Endothelial cell of umbilical vein (primary cell): ENCODE measurements at regions of chr11 and their contacts with region 1.

Region 1: GRCh38 chr11:47407746-47408590 is at the start of gene SLC39A13:
- DNase-seq: peak; percentile 98
- H3K4me3 ChIP-seq: peak within 1 kb of the TSS; percentile 46 to 91 (median 72)
- H3K27ac ChIP-seq: peak within 1 kb of the TSS; percentile 90
- H3K4me1 ChIP-seq: peaks cover 29% of the 10 kb centered on the region
- H3K27me3 ChIP-seq: no peaks in the 10 kb centered on the region
- CTCF ChIP-seq: peak; percentile 76 to 99
- POLR2A ChIP-seq: peak; percentile 86
- total RNA-seq, gene SLC39A13: 86.3 and 91.9 TPM in 2 replicates

Region 2: DNA sequence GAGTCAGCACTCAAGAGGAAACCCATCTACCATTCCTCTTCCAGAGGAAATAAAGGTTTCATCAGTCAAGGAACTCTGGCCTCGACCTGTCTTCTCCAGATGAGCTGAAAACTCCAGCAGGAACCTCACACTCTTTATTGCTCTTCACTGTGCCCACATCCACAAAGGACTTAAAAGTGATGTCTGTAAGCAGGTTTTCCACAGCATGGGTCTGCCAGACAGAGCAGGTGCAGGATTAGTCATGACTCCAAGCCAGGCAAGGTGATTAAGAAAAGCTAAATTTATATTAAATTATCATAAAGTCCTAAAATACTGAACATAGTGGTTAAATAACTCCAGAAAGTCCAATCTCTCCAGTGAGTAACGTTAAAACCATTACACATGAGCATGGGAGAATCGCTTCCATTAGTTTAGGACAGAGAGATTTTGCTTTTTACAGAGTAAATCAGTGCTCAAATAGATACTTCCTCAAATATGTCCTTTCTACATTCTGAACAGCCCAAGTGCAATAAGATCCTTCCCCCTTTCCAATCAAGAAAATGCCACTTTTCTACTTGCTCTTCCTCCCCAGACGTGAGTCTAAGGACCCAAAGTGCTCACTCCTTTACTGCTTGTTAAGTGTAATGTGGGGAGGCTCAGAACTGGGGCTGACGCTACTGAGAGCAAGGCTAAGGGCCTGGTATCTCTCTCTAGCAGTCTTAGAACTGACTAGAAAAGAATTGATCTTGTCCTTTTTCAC is 551.2 kb before region 1 on chr11:
- CTCF ChIA-PET with region 1: no interaction called
- POLR2A ChIA-PET with region 1: no interaction called
- dilution Hi-C with region 1: no loop called
- intact Hi-C with region 1: no loop called
- DNase-seq: no peak
- H3K4me3 ChIP-seq: no peak overlapping the region
- H3K27ac ChIP-seq: no peak overlapping the region
- H3K4me1 ChIP-seq: no peaks in the 10 kb centered on the region
- H3K27me3 ChIP-seq: no peaks in the 10 kb centered on the region
- CTCF ChIP-seq: no peak
- POLR2A ChIP-seq: no peak

Region 3: GRCh38 chr11:47176328-47177228 is 231.4 kb before region 1 on chr11 and contains the start of gene ARFGAP2:
- CTCF ChIA-PET with region 1: interaction called, 3 read pairs
- POLR2A ChIA-PET with region 1: no interaction called
- dilution Hi-C with region 1: no loop called
- intact Hi-C with region 1: loop called (anchors 1 kb)
- DNase-seq: peak; percentile 97
- H3K4me3 ChIP-seq: peak within 1 kb of the TSS; percentile 69 to 95 (median 79)
- H3K27ac ChIP-seq: peak within 1 kb of the TSS; percentile 91
- H3K4me1 ChIP-seq: peaks cover 13% of the 10 kb centered on the region
- H3K27me3 ChIP-seq: no peaks in the 10 kb centered on the region
- CTCF ChIP-seq: no peak
- POLR2A ChIP-seq: peak; percentile 80
- total RNA-seq, gene ARFGAP2: 78.9 and 84.3 TPM in 2 replicates

Region 4: DNA sequence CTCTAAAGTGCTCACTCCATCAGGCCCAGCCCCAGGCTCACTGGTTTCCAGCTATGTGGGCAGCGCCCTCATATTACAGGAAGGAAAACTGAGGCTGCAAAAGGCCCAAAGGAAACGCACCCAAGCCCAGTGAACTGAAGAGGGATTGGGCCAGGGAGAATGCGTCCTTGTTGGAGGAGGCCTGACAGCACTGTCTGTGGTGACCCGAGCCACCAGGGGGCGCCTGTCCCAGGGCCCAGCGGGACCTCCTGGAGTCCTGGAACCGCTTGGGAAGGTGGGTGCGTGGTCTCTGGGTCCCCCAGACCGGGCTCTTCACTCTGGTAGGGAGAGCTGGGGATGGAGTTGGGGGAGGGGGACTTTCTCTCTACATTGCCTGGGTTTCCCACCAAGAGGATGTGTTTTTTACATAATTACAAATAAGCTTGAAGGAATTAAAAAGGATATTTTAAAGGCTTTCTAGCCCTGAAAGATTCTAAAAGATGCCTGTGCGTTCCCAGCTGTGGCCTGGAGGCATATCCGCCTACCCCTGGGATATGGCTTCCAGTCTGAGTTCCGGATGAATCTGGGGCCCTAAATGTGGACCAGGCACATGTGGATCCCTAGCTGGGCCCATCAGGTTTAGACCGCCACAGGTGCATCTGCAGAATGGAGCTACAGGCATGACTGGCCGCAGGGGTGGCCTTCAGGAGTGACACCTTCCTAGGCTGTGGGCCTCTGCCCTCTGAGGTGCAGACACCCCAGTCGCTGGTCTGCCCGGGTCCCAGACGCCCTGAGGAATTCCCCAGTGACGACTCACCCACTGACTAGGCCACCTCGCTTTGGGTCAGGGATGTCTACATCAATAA is 33.9 kb before region 1 on chr11:
- CTCF ChIA-PET with region 1: interaction called, 148 read pairs
- POLR2A ChIA-PET with region 1: no interaction called
- dilution Hi-C with region 1: no loop called
- intact Hi-C with region 1: loop called (anchors 1 kb)
- DNase-seq: peak; percentile 76
- H3K4me3 ChIP-seq: no peak overlapping the region
- H3K27ac ChIP-seq: peak overlapping the region; percentile 44
- H3K4me1 ChIP-seq: peaks cover 9% of the 10 kb centered on the region
- H3K27me3 ChIP-seq: peaks cover 1% of the 10 kb centered on the region in 2 experiments
- CTCF ChIP-seq: peak; percentile 90 to 99
- POLR2A ChIP-seq: no peak

Region 5: GRCh38 chr11:47426061-47426956 is 18.3 kb after region 1 on chr11 and contains the start of gene PSMC3:
- CTCF ChIA-PET with region 1: interaction called, 16 read pairs
- POLR2A ChIA-PET with region 1: interaction called, 4 read pairs
- dilution Hi-C with region 1: no loop called
- intact Hi-C with region 1: no loop called
- DNase-seq: peak; percentile 97
- H3K4me3 ChIP-seq: peak within 1 kb of the TSS; percentile 68 to 89 (median 79)
- H3K27ac ChIP-seq: peak within 1 kb of the TSS; percentile 90
- H3K4me1 ChIP-seq: peaks cover 10% of the 10 kb centered on the region
- H3K27me3 ChIP-seq: no peaks in the 10 kb centered on the region
- CTCF ChIP-seq: no peak
- POLR2A ChIP-seq: peak; percentile 80
- total RNA-seq, gene PSMC3: 202 and 203 TPM in 2 replicates

Region 6: DNA sequence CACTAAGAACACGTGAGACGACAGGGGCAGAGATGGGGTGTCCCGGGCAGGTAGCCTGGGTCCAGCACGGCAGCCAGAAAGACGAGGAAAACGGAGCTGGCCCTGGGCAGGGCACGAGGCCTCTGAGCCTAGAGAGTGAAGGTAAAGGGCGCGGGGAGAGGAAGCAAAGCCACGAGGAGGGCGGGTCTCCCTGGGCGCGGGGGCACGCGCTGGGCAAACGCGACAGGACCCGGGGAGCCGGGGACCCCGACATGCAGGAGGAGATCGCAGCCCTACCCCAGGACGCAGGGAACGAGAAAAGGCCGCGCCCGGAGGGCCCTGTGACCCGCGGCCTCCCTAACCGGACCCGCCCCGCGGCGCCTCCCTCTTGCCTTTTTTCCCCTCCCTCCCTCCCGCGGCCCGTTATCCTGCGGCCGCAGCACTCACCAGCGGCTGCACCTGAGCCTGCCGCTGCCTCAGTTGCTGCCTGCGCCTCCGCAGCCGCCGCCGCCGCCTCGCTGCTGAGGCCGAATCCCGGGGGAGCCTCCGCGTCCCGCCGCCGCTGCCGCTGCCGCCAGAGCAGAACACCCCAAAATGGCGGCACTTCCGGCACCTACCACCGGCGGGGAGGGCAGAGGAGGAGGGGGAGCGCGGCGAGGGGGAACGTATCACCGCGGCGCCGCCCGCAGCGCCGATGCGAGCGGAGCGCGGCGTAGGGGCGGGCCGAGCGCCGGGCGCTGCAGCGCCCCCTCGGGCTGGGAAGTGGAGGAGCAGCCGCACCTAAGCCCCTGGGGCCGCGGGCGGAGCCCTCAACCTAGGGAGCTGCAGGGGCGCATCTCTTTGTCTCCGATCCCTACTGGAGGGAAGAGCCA is 144.8 kb after region 1 on chr11 and contains the start of gene CELF1:
- CTCF ChIA-PET with region 1: no interaction called
- POLR2A ChIA-PET with region 1: no interaction called
- dilution Hi-C with region 1: no loop called
- intact Hi-C with region 1: loop called (anchors 5 kb)
- DNase-seq: peak; percentile 90
- H3K4me3 ChIP-seq: peak within 1 kb of the TSS; percentile 69 to 75 (median 74)
- H3K27ac ChIP-seq: peak within 1 kb of the TSS; percentile 33
- H3K4me1 ChIP-seq: peaks cover 9% of the 10 kb centered on the region
- H3K27me3 ChIP-seq: no peaks in the 10 kb centered on the region
- CTCF ChIP-seq: peak; percentile 84 to 95
- POLR2A ChIP-seq: peak; percentile 87
- total RNA-seq, gene CELF1: 113 and 120 TPM in 2 replicates

Region 7: GRCh38 chr11:47858169-47858543 is 450.2 kb after region 1 on chr11:
- CTCF ChIA-PET with region 1: no interaction called
- POLR2A ChIA-PET with region 1: no interaction called
- dilution Hi-C with region 1: no loop called
- intact Hi-C with region 1: loop called (anchors 10 kb)
- DNase-seq: peak; percentile 57
- H3K4me3 ChIP-seq: no peak overlapping the region
- H3K27ac ChIP-seq: no peak overlapping the region
- H3K4me1 ChIP-seq: peaks cover 10% of the 10 kb centered on the region
- H3K27me3 ChIP-seq: no peaks in the 10 kb centered on the region
- CTCF ChIP-seq: no peak
- POLR2A ChIP-seq: no peak